ENCODE measurements at regions of chr19 and their contacts with region 1.

Region 1: GRCh38 chr19:41353466-41354342 is at the start of gene TGFB1:
- DNase-seq: peak; percentile 89 to 98 (median 94)
- ATAC-seq: peak; percentile 60
- H3K4me3 ChIP-seq: peak within 1 kb of the TSS; percentile 99
- H3K4me3 Mint-ChIP-seq: peak within 1 kb of the TSS; percentile 94
- H3K27ac ChIP-seq: peak within 1 kb of the TSS; percentile 82 to 94
- H3K27ac Mint-ChIP-seq: peak within 1 kb of the TSS; percentile 93
- H3K4me1 ChIP-seq: peaks cover 72% of the 10 kb centered on the region
- H3K4me1 Mint-ChIP-seq: peaks cover 81% of the 10 kb centered on the region
- H3K27me3 ChIP-seq: no peaks in the 10 kb centered on the region
- H3K27me3 Mint-ChIP-seq: no peaks in the 10 kb centered on the region
- CTCF ChIP-seq: peak; percentile 80
- total RNA-seq, gene TGFB1: 406 to 416 TPM

Region 2: GRCh38 chr19:41303954-41304353 is 49.8 kb before region 1 on chr19:
- CTCF ChIA-PET with region 1: interaction called, 20 read pairs
- POLR2A ChIA-PET with region 1: interaction called, 45 read pairs
- intact Hi-C with region 1: loop called (anchors 1 to 5 kb)
- DNase-seq: peak in 6 of 14 experiments; percentile 25 to 75 (median 50)
- ATAC-seq: no peak
- H3K4me3 ChIP-seq: peak overlapping the region; percentile 44
- H3K4me3 Mint-ChIP-seq: peak overlapping the region; percentile 84
- H3K27ac ChIP-seq: peak overlapping the region; percentile 73 to 97
- H3K27ac Mint-ChIP-seq: peak overlapping the region; percentile 97
- H3K4me1 ChIP-seq: peaks cover 99% of the 10 kb centered on the region
- H3K4me1 Mint-ChIP-seq: peaks cover 99% of the 10 kb centered on the region
- H3K27me3 ChIP-seq: no peaks in the 10 kb centered on the region
- H3K27me3 Mint-ChIP-seq: no peaks in the 10 kb centered on the region
- CTCF ChIP-seq: no peak

Region 3: GRCh38 chr19:41341669-41342490 is 11.8 kb before region 1 on chr19:
- CTCF ChIA-PET with region 1: interaction called, 12 read pairs
- POLR2A ChIA-PET with region 1: interaction called, 16 read pairs
- intact Hi-C with region 1: no loop called
- DNase-seq: peak in 4 of 14 experiments; percentile 39 to 61 (median 42)
- ATAC-seq: peak; percentile 45
- H3K4me3 ChIP-seq: no peak overlapping the region
- H3K4me3 Mint-ChIP-seq: peak overlapping the region; percentile 58
- H3K27ac ChIP-seq: no peak overlapping the region
- H3K27ac Mint-ChIP-seq: peak overlapping the region; percentile 70
- H3K4me1 ChIP-seq: peaks cover 60% of the 10 kb centered on the region
- H3K4me1 Mint-ChIP-seq: peaks cover 45% of the 10 kb centered on the region
- H3K27me3 ChIP-seq: no peaks in the 10 kb centered on the region
- H3K27me3 Mint-ChIP-seq: no peaks in the 10 kb centered on the region
- CTCF ChIP-seq: peak; percentile 28

Region 4: GRCh38 chr19:41397086-41398049 is 43.7 kb after region 1 on chr19 and contains the starts of genes BCKDHA and EXOSC5:
- CTCF ChIA-PET with region 1: no interaction called
- POLR2A ChIA-PET with region 1: interaction called, 3 read pairs
- intact Hi-C with region 1: loop called in 1 of 2 experiments (anchors 2 kb)
- DNase-seq: peak; percentile 97 to 100 (median 99)
- ATAC-seq: peak; percentile 98
- H3K4me3 ChIP-seq: peak within 1 kb of the TSS; percentile 82
- H3K4me3 Mint-ChIP-seq: peak within 1 kb of the TSS; percentile 96
- H3K27ac ChIP-seq: peak within 1 kb of the TSS; percentile 91 to 99
- H3K27ac Mint-ChIP-seq: peak within 1 kb of the TSS; percentile 99
- H3K4me1 ChIP-seq: peaks cover 38% of the 10 kb centered on the region
- H3K4me1 Mint-ChIP-seq: peaks cover 57% of the 10 kb centered on the region
- H3K27me3 ChIP-seq: no peaks in the 10 kb centered on the region
- H3K27me3 Mint-ChIP-seq: no peaks in the 10 kb centered on the region
- CTCF ChIP-seq: no peak
- total RNA-seq, gene BCKDHA: 12.2 to 13.1 TPM
- total RNA-seq, gene EXOSC5: 6.5 to 7.5 TPM

Region 5: GRCh38 chr19:41548954-41549688 is 195.4 kb after region 1 on chr19:
- CTCF ChIA-PET with region 1: no interaction called
- POLR2A ChIA-PET with region 1: interaction called, 4 read pairs
- intact Hi-C with region 1: loop called in 1 of 2 experiments (anchors 5 kb)
- DNase-seq: peak in 13 of 14 experiments; percentile 57 to 91 (median 74)
- ATAC-seq: peak; percentile 63
- H3K4me3 ChIP-seq: peak overlapping the region; percentile 74
- H3K4me3 Mint-ChIP-seq: peak overlapping the region; percentile 97
- H3K27ac ChIP-seq: peak overlapping the region; percentile 62 to 67
- H3K27ac Mint-ChIP-seq: peak overlapping the region; percentile 82
- H3K4me1 ChIP-seq: peaks cover 53% of the 10 kb centered on the region
- H3K4me1 Mint-ChIP-seq: peaks cover 70% of the 10 kb centered on the region
- H3K27me3 ChIP-seq: no peaks in the 10 kb centered on the region
- H3K27me3 Mint-ChIP-seq: no peaks in the 10 kb centered on the region
- CTCF ChIP-seq: no peak